GM10248 (cell line): ENCODE measurements at regions of chr6 and their contacts with region 1.

Region 1: DNA sequence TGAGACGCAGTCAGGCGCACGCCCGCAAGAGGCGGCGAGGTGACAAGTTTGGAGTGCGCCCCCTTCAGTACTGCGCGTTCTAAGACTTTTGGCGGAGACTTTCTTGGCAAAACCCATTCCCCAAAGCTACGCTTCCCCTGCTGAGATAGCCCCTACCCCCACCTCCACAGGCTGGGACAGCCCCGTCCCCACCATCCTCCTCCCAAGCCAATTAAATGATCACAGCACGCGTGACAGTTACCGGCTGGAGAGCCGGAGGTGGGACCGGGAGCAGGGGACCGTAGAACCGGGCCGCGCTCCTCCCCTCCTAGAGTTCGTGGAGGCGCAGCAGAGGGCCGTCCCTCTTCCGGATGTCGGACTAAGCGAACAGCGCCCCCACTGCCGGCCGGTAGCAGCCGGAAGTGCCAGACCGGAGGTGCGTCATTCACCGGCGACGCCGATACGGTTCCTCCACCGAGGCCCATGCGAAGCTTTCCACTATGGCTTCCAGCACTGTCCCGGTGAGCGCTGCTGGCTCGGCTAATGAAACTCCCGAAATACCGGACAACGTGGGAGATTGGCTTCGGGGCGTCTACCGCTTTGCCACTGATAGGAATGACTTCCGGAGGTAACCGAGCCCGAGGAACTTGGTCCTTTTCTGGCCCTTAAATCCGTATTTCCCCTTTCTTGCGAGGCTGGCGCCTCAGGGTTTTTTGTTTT is at the start of gene TOMM6:
- DNase-seq: peak; percentile 93
- CTCF ChIP-seq: peak; percentile 92

Region 2: GRCh38 chr6:41602864-41603608 is 184.3 kb before region 1 on chr6:
- CTCF ChIA-PET with region 1: interaction called, 31 read pairs
- POLR2A ChIA-PET with region 1: no interaction called
- DNase-seq: peak; percentile 87
- CTCF ChIP-seq: peak; percentile 97

Region 3: GRCh38 chr6:41757271-41757670 is 30.1 kb before region 1 on chr6:
- CTCF ChIA-PET with region 1: no interaction called
- POLR2A ChIA-PET with region 1: no interaction called
- DNase-seq: no peak
- CTCF ChIP-seq: no peak

Region 4: GRCh38 chr6:41767156-41767833 is 20.1 kb before region 1 on chr6:
- CTCF ChIA-PET with region 1: interaction called, 22 read pairs
- POLR2A ChIA-PET with region 1: no interaction called
- DNase-seq: no peak
- CTCF ChIP-seq: no peak

Region 5: GRCh38 chr6:41818271-41819054 is 31.1 kb after region 1 on chr6:
- CTCF ChIA-PET with region 1: interaction called, 24 read pairs
- POLR2A ChIA-PET with region 1: interaction called, 3 read pairs
- DNase-seq: no peak
- CTCF ChIP-seq: no peak

Region 6: DNA sequence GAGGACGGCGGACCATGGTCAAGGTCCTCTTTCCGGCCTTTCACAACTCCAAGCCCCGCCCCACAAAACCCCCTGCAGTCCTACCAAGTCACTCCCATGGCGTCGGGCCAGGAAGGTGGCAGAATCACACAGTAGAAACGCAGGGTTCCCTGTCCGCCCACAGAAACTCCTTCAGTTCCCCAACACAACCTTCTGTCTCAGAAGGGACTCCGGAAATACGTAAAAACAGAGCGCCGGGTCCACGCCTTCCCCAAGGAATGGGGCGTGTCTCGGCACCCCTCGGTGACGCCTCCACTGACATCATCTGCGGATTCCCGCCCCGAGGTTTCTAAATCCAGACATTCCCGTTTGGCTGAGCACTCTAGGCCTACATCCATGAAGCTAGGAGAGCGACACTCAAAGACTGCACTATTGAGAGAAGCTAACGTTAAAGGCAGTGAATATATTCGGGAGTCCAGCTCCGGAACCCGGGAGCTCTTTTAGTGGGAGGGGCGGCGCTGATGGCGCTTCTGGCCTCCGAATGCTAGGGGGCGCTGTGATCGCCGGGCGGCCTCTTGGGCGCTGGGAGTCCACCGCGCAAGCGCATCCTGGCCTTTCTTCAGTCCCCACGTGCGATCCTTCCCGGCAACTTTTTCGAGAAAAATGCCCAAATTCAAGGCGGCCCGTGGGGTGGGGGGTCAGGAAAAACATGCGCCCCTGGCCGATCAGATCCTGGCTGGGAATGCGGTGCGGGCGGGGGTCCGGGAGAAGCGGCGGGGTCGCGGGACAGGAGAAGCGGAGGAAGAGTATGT is 133.7 kb after region 1 on chr6 and contains the starts of genes BYSL and MED20:
- CTCF ChIA-PET with region 1: interaction called, 54 read pairs
- POLR2A ChIA-PET with region 1: no interaction called
- DNase-seq: peak; percentile 96
- CTCF ChIP-seq: peak; percentile 92

Region 7: DNA sequence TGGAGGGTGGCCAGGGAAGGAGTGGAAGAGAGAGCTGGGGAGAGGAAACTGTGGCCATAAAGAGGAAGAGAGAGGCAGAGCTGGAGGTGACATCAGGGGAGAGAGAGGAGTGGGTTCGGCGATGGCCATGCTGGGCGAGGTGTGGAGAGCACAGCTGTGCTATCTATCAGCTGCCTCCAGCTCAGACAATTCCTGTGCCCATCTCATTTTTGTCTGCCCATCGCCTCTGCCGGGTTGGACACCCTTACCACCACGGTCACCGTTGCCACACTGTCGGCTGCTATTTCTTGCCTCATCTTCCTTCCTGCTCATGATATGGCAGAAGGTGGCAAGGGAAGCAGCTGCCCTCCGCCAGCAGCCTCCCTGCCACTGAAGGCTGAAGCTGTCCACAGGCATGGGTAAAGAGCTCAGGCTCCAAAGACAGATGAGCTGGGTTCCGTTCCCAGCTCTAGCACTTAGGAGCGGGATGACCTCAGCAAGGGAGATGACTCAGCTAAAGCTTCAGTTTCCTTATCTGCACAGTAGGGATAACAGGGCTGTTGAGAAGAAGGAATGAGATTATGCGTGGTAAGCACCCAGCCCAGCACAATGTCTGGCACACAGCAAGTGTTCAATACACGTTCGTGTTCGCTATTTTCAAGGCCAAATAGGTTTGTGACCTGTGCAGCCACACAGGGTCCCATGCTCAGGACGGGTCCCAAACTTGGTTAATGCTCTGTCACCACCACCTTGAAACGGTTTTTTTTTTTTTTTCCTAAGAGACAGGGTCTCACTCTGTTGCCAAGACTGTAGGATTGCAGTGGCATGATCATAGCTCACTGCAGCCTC is 241.1 kb after region 1 on chr6:
- CTCF ChIA-PET with region 1: interaction called, 36 read pairs
- POLR2A ChIA-PET with region 1: interaction called, 4 read pairs
- DNase-seq: no peak
- CTCF ChIP-seq: no peak

Region 8: DNA sequence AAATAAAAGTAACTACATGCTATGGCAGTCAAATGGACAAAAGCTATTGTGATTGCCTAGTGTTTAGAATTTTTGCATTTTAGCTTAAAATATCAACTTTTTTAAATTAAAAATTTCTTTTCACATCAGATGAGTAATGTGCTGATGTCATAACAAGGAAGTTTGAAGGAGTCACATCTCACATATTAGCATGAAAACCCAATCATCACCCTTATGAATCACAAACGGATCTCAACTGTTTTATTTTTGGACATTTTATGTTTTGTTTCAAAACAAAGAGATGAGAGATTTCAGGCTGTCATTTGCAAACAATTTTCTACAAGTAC is 718.0 kb after region 1 on chr6:
- CTCF ChIA-PET with region 1: no interaction called
- POLR2A ChIA-PET with region 1: no interaction called
- DNase-seq: no peak
- CTCF ChIP-seq: no peak